CD8-positive, alpha-beta T cell (primary cell): ENCODE measurements at regions of chr6 and their contacts with region 1.

Region 1: GRCh38 chr6:109491207-109491938 is 8.4 kb upstream of the ZBTB24 start:
- DNase-seq: peak in 5 of 9 experiments; percentile 13 to 66 (median 51)
- ATAC-seq: peak; percentile 98
- H3K4me3 ChIP-seq: no peak overlapping the region
- H3K4me3 Mint-ChIP-seq: peak overlapping the region; percentile 44
- H3K27ac ChIP-seq: peak overlapping the region in 1 of 2 experiments; percentile 65
- H3K27ac Mint-ChIP-seq: peak overlapping the region; percentile 85
- H3K4me1 ChIP-seq: peaks cover 16% of the 10 kb centered on the region
- H3K4me1 Mint-ChIP-seq: peaks cover 21% of the 10 kb centered on the region
- H3K27me3 ChIP-seq: no peaks in the 10 kb centered on the region
- H3K27me3 Mint-ChIP-seq: no peaks in the 10 kb centered on the region
- CTCF ChIP-seq: no peak

Region 2: DNA sequence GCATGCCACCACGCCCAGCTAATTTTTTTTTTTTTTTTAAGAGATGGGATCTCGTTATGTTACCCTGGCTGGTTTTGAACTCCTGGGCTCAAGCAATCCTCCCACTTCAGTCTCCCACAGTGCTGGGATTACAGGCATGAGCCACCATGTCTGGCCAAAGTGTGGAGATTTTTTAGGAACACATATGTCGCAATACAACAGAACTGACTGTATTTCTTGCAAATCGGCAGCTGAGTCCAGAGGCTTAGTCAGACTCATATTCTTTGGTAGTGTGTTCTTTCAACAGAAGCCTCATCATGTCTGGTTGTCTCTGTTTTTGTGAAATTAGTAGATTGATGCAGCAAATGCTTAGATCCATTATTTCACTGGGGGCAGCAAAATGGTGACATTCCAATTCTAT is 85.2 kb before region 1 on chr6:
- CTCF ChIA-PET with region 1: no interaction called
- POLR2A ChIA-PET with region 1: no interaction called
- intact Hi-C with region 1: no loop called
- DNase-seq: no peak
- ATAC-seq: no peak
- H3K4me3 ChIP-seq: no peak overlapping the region
- H3K4me3 Mint-ChIP-seq: no peak overlapping the region
- H3K27ac ChIP-seq: no peak overlapping the region
- H3K27ac Mint-ChIP-seq: no peak overlapping the region
- H3K4me1 ChIP-seq: no peaks in the 10 kb centered on the region
- H3K4me1 Mint-ChIP-seq: no peaks in the 10 kb centered on the region
- H3K27me3 ChIP-seq: no peaks in the 10 kb centered on the region
- H3K27me3 Mint-ChIP-seq: peaks cover 2% of the 10 kb centered on the region
- CTCF ChIP-seq: no peak

Region 3: DNA sequence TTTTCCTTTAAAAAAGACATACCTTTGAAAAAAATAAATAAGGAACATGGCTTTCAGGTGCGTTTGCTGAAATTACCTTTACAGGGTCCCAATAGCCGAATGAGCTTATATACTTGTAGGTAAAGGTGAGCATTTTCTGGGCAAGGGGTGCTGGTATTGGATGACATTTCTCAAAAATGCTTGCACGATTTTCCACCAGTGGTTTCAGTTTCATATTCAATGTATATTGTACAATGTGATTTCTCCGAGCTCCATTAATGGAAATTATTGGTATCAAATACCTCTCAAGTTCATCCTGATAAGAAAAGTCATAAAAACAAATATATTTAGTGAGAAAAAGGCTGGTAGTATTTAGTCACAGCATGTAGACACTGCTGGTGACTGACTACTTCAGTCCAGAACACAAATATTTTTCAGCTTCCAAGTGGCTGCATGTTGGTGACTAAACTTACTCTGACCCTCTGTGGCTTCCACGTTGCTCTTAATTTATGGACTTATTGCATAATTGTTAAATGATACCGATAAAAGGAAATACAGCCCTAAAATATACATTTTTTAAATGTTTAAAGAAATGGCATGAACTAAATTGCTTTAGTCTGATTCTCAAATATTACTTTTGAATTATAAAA is 24.5 kb after region 1 on chr6:
- CTCF ChIA-PET with region 1: no interaction called
- POLR2A ChIA-PET with region 1: interaction called, 4 read pairs
- intact Hi-C with region 1: loop called in 1 of 2 experiments (anchors 2 kb)
- DNase-seq: peak in 2 of 9 experiments; percentile 22 to 37
- ATAC-seq: peak; percentile 57
- H3K4me3 ChIP-seq: peak overlapping the region; percentile 13 to 19
- H3K4me3 Mint-ChIP-seq: peak overlapping the region; percentile 71
- H3K27ac ChIP-seq: no peak overlapping the region
- H3K27ac Mint-ChIP-seq: no peak overlapping the region
- H3K4me1 ChIP-seq: peaks cover 26% of the 10 kb centered on the region
- H3K4me1 Mint-ChIP-seq: peaks cover 30% of the 10 kb centered on the region
- H3K27me3 ChIP-seq: no peaks in the 10 kb centered on the region
- H3K27me3 Mint-ChIP-seq: no peaks in the 10 kb centered on the region
- CTCF ChIP-seq: no peak